Aorta (tissue), 5 donors: ENCODE measurements at regions of chr5 and their contacts with region 1.

Region 1: DNA sequence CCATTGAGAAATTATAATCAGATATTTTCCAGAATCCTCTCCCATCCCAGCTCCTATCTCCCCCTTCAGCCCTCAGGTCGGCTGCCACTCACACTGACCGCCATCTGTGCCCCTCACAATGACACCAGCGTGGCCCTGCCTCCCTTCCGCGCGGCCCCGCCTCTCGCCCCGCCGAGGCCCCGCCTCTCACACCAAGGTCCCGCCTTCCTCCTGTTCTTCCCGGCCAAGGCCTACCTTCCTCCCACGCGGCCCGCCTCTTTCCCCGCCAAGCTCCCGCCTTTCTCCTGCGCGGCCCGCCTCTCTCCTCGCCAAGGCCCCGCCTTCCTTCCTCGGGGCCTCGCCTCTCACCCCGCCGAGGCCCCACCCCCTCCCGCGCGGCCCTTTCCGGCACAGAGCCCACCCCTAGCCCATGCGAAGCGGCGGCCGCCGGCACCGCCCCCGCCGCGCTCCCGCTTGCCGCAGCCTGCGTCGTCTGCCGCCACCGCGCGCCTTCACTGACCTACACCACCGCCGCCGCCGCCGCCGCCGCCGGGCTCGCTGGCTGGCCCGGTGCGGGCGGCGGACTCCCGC is at the start of gene DNAJC21:
- DNase-seq: peak; percentile 99 to 100
- ATAC-seq: peak; percentile 99
- H3K4me3 ChIP-seq: peak within 1 kb of the TSS; percentile 57 to 73
- H3K27ac ChIP-seq: peak within 1 kb of the TSS; percentile 84 to 95
- H3K4me1 ChIP-seq: peaks cover 0 to 4% of the 10 kb centered on the region in 2 donors
- H3K27me3 ChIP-seq: no peaks in the 10 kb centered on the region
- total RNA-seq, gene DNAJC21: 40.4 to 50.9 TPM

Region 2: GRCh38 chr5:34598177-34598794 is 330.9 kb before region 1 on chr5:
- intact Hi-C with region 1: no loop called
- DNase-seq: no peak
- ATAC-seq: peak; percentile 83
- H3K4me3 ChIP-seq: no peak overlapping the region
- H3K27ac ChIP-seq: peak overlapping the region in 1 of 2 donors; percentile 17
- H3K4me1 ChIP-seq: peaks cover 4 to 6% of the 10 kb centered on the region in 2 donors
- H3K27me3 ChIP-seq: no peaks in the 10 kb centered on the region

Region 3: DNA sequence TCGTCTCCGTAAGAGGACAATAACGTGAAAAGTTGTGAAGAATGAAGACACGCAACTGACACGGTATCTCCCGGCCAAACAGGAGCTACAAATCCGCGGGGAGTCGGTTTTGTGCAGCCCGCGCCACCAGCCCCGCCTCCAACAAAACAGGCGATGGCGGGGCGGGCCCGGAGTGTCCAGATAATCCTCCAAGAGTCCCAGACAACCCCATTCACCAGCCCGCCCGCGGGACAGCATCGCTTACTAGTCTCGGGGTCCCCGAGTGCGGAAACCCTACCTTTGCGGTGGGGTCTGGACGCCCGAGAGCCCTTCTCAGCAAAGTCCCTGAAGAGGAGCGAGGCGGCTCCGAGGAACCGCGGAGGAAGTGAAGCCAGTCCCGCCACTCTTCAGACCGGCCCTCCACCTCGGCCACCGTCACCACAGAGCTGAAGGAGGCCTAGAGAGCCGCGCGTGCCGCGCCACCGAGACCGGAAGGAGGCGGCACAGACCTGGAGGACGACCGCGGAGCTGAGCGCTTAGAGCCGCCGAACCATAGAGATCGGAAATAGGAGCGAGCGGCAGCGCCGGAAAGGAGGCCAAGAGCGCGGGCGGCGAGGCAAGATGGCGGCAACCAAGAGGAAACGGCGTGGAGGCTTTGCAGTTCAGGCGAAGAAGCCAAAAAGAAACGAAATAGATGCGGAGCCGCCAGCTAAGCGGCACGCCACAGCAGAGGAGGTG is 13.9 kb before region 1 on chr5 and contains the starts of genes BRIX1 and RAD1:
- intact Hi-C with region 1: loop called in 1 of 2 experiments (anchors 1 kb)
- DNase-seq: peak; percentile 98 to 99
- ATAC-seq: peak; percentile 100
- H3K4me3 ChIP-seq: peak within 1 kb of the TSS; percentile 62 to 64
- H3K27ac ChIP-seq: peak within 1 kb of the TSS; percentile 0 to 73
- H3K4me1 ChIP-seq: peaks cover 2% of the 10 kb centered on the region in 2 donors
- H3K27me3 ChIP-seq: no peaks in the 10 kb centered on the region
- total RNA-seq, gene BRIX1: 14.9 to 19.0 TPM
- total RNA-seq, gene RAD1: 17.9 to 19.3 TPM